Aorta (tissue), 5 donors: ENCODE measurements at regions of chr5 and their contacts with region 1.

Region 1: GRCh38 chr5:35166043-35166442 is 64.2 kb downstream of the PRLR start:
- DNase-seq: no peak
- ATAC-seq: no peak
- H3K4me3 ChIP-seq: no peak overlapping the region
- H3K27ac ChIP-seq: no peak overlapping the region
- H3K4me1 ChIP-seq: no peaks in the 10 kb centered on the region
- H3K27me3 ChIP-seq: no peaks in the 10 kb centered on the region

Region 2: GRCh38 chr5:35302544-35302943 is 136.5 kb after region 1 on chr5:
- intact Hi-C with region 1: loop called in 1 of 2 experiments (anchors 5 kb)
- DNase-seq: no peak
- ATAC-seq: no peak
- H3K4me3 ChIP-seq: no peak overlapping the region
- H3K27ac ChIP-seq: no peak overlapping the region
- H3K4me1 ChIP-seq: no peaks in the 10 kb centered on the region
- H3K27me3 ChIP-seq: no peaks in the 10 kb centered on the region